ENCODE measurements at regions of chr4 and their contacts with region 1.

Region 1: GRCh38 chr4:163332500-163333406 is at the start of gene NPY1R:
- DNase-seq: peak; percentile 46 to 76 (median 60)
- ATAC-seq: peak; percentile 98
- H3K4me3 ChIP-seq: peak within 1 kb of the TSS; percentile 16
- H3K27ac ChIP-seq: no peak within 1 kb of the TSS
- H3K4me1 ChIP-seq: peaks cover 0 to 8% of the 10 kb centered on the region in 2 experiments; a peak in 4 of 5 replicates
- H3K27me3 ChIP-seq: peaks cover 0 to 15% of the 10 kb centered on the region in 2 experiments; a peak in 1 of 5 replicates
- CTCF ChIP-seq: peak; percentile 67 to 80 (median 71)
- EP300 ChIP-seq: no peak
- POLR2A ChIP-seq: no peak
- RAD21 ChIP-seq: peak; percentile 61 to 76
- polyA plus RNA-seq, gene NPY1R: 0.04 to 0.10 TPM

Region 2: DNA sequence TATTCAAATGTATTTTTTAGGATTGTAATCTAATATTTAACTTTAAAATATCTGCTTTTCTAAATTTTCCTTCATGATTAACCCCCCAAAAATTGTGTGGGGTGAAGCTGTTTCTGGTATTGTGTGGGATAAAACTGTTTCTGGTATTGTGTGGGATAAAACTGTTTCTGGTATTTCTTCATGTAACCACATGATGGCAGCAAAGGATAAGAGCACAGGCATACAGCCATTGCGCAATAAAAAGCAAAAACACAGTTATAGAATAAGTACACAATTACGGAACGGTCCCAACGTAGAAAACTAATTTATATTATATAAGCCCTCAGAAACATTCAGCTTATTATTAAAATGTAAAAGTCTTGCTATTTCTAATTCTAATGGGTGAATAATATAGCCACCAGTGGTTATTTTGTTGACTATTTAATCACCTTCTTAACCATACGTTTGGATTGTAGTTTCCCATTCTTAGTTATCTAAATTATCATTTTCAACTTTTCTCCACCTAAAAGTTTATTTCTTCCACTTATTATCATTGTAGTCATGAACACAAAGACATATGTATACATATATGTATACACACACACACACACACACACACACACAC is 835.1 kb before region 1 on chr4:
- CTCF ChIA-PET with region 1: no interaction called
- POLR2A ChIA-PET with region 1: no interaction called
- in situ Hi-C with region 1: no loop called
- intact Hi-C with region 1: loop called (anchors 5 kb)
- DNase-seq: peak; percentile 1 to 5 (median 4)
- ATAC-seq: no peak
- H3K4me3 ChIP-seq: no peak overlapping the region
- H3K27ac ChIP-seq: no peak overlapping the region
- H3K4me1 ChIP-seq: no peaks in the 10 kb centered on the region
- H3K27me3 ChIP-seq: no peaks in the 10 kb centered on the region
- CTCF ChIP-seq: peak; percentile 25 to 47 (median 38); a peak in 3 of 6 replicates
- EP300 ChIP-seq: no peak
- POLR2A ChIP-seq: no peak
- RAD21 ChIP-seq: peak; percentile 42 to 56; a peak in 3 of 4 replicates

Region 3: DNA sequence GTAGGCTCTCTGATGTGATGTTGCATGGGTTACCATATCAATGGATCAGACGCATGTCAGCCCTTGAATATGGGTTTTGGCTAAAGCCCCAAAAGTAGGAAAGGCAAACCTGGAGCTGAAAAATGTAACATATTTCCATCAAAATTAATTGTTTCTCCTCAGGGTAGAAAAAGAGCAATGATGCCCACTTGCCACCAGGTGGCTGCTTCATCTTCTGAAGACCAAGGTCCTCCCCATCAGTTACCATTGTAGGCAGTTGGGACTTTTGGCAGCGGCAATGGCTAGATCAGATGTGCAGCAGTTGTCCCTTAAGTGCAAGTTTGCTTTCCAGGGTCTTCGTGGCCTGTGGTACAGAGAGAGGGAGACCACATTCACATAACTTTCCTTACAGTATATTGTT is 284.3 kb before region 1 on chr4:
- CTCF ChIA-PET with region 1: interaction called, 3 read pairs
- POLR2A ChIA-PET with region 1: no interaction called
- in situ Hi-C with region 1: no loop called
- intact Hi-C with region 1: loop called (anchors 1 kb)
- DNase-seq: peak; percentile 25 to 52 (median 41)
- ATAC-seq: peak; percentile 86
- H3K4me3 ChIP-seq: no peak overlapping the region
- H3K27ac ChIP-seq: no peak overlapping the region
- H3K4me1 ChIP-seq: no peaks in the 10 kb centered on the region
- H3K27me3 ChIP-seq: no peaks in the 10 kb centered on the region
- CTCF ChIP-seq: peak; percentile 57 to 66 (median 64)
- EP300 ChIP-seq: no peak
- POLR2A ChIP-seq: no peak
- RAD21 ChIP-seq: peak; percentile 53 to 69

Region 4: DNA sequence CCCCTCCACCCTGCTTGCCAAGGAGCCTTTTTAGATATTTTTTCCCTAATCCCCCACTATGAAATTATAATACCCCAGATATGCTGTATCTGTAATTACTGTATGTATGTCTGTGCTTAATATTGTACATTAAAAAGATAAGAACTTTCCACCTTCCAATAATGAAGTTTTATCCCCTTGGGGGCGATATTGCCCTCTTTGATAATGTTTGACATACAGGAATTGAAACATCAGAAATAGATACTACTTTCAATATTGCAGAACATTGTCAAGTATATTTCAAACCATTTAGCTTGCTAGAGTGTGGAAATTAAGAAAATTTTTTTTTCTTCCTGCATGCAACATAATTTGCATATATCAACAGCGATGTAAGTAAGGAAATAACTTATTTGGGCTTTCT is 225.0 kb before region 1 on chr4:
- CTCF ChIA-PET with region 1: no interaction called
- POLR2A ChIA-PET with region 1: no interaction called
- in situ Hi-C with region 1: loop called (anchors 10 kb)
- intact Hi-C with region 1: loop called (anchors 1 kb)
- DNase-seq: peak in 1 of 4 experiments; percentile 20
- ATAC-seq: no peak
- H3K4me3 ChIP-seq: no peak overlapping the region
- H3K27ac ChIP-seq: no peak overlapping the region
- H3K4me1 ChIP-seq: no peaks in the 10 kb centered on the region
- H3K27me3 ChIP-seq: no peaks in the 10 kb centered on the region
- CTCF ChIP-seq: peak in 1 of 3 experiments; percentile 43; a peak in 2 of 6 replicates
- EP300 ChIP-seq: no peak
- POLR2A ChIP-seq: no peak
- RAD21 ChIP-seq: peak; percentile 16 to 26; a peak in 1 of 4 replicates

Region 5: GRCh38 chr4:163467082-163467770 is 134.5 kb after region 1 on chr4:
- CTCF ChIA-PET with region 1: no interaction called
- POLR2A ChIA-PET with region 1: no interaction called
- in situ Hi-C with region 1: no loop called
- intact Hi-C with region 1: no loop called
- DNase-seq: no peak
- ATAC-seq: no peak
- H3K4me3 ChIP-seq: no peak overlapping the region
- H3K27ac ChIP-seq: no peak overlapping the region
- H3K4me1 ChIP-seq: no peaks in the 10 kb centered on the region
- H3K27me3 ChIP-seq: peaks cover 0 to 6% of the 10 kb centered on the region in 2 experiments; a peak in 2 of 5 replicates
- CTCF ChIP-seq: no peak
- EP300 ChIP-seq: no peak
- POLR2A ChIP-seq: no peak
- RAD21 ChIP-seq: no peak

Region 6: GRCh38 chr4:163544407-163545038 is 211.8 kb after region 1 on chr4:
- CTCF ChIA-PET with region 1: no interaction called
- POLR2A ChIA-PET with region 1: no interaction called
- in situ Hi-C with region 1: no loop called
- intact Hi-C with region 1: loop called (anchors 2 kb)
- DNase-seq: peak; percentile 70 to 79 (median 74)
- ATAC-seq: peak; percentile 95
- H3K4me3 ChIP-seq: no peak overlapping the region
- H3K27ac ChIP-seq: no peak overlapping the region
- H3K4me1 ChIP-seq: no peaks in the 10 kb centered on the region
- H3K27me3 ChIP-seq: no peaks in the 10 kb centered on the region
- CTCF ChIP-seq: peak; percentile 80 to 95 (median 85)
- EP300 ChIP-seq: no peak
- POLR2A ChIP-seq: no peak
- RAD21 ChIP-seq: peak; percentile 54 to 63

Measured in K562 (cell line).